MCF 10A (cell line): ENCODE measurements at regions of chrX and their contacts with region 1.

Region 1: DNA sequence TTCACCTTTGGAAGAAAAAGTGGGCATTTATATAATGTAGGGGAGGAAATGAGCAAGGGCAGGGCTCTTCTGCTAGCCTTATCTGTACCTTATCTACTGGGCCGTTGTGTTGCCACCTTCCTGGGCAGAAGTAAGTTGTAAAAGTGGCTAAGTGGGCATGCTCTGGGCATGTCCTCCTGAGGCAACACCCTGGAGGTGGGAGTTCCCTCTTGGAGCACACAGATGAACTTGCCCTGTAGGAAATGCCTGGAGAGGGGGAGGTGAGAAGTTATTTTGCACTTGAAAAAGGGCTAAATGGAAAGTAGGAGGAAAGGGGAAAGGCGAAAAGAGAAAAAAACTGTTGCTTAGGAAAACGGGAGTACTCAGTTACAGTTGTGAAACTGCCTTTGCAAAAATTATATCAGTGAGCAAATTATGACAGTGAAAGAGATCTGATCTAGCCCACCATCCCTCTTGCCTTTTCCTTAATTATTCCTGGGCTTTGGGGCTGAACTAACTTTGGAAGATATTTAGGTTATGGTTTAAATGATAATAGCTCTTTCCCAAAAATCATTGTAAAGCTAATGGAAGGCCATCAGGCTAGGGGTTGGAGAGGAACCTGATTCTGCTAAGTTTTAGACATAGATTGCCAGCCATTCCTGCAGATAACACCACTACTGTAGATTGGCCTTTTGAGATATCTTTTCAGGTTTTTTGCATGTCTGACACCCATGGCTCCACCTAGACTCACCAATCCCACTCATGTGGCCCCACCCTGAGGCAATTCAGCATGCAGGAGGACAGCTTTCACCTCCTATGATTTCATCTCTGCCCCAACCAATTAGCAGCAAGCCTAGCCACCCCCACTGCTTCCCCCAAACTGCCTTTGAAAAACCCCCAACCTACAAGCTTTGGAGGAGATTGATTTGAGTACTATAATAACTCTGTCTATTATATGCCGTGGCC is 20.5 kb upstream of the ZNF81 start:
- DNase-seq: peak; percentile 11
- H3K4me3 Mint-ChIP-seq: peak overlapping the region; percentile 9
- H3K27ac Mint-ChIP-seq: peak overlapping the region; percentile 63
- H3K4me1 Mint-ChIP-seq: peaks cover 16% of the 10 kb centered on the region
- H3K27me3 Mint-ChIP-seq: no peaks in the 10 kb centered on the region
- CTCF ChIP-seq: no peak

Region 2: DNA sequence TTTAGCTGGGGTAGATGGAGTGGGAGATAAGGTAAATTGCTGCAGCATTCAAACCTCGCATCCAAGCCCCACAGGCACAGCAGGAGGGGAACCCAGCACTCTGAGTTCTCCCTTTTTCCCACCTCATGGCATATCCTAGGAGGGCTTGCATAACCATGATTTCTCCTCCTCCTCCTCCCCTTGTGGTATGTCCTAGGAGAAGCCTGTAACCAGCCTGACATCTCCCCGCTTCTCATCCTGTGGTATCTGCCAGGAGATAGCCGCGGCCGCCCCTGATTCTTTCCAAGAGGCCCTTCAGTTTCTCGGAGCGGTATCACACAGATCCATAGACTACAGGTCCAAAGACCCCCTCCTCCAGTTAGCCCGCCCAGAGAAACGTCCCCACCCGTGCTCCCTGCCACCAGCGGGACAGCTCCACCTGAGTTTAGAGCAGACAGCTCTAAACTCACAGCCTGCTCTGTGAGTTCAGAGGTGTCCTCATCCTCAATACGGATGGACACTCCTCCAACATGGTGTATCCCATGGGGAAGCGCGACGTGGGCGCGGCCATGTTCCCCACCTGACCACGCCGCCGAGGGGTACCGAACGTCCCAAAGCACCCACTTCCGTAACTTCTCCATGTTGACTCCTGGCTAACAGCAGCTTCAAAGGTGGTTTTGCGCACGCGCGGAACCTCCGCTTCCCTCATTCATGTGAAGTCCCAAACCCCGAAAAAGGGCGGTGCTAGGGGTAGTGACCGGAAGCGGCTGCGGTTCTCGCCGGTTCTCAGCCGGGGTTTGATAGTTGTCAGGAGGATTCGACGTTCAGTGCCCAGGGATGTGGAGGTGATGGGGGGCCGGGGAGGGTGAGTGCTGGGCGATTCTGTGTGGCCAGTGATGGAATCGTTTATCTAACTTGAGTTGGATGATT is 20.2 kb after region 1 on chrX and contains the start of gene ZNF81:
- CTCF ChIA-PET with region 1: interaction called, 6 read pairs
- POLR2A ChIA-PET with region 1: interaction called, 10 read pairs
- intact Hi-C with region 1: no loop called
- DNase-seq: peak; percentile 95
- H3K4me3 Mint-ChIP-seq: peak within 1 kb of the TSS; percentile 100
- H3K27ac Mint-ChIP-seq: peak within 1 kb of the TSS; percentile 97
- H3K4me1 Mint-ChIP-seq: peaks cover 5% of the 10 kb centered on the region
- H3K27me3 Mint-ChIP-seq: no peaks in the 10 kb centered on the region
- CTCF ChIP-seq: no peak
- total RNA-seq, gene ZNF81: 7.5 and 7.8 TPM in 2 replicates